ENCODE measurements at regions of chr3 and their contacts with region 1.

Region 1: GRCh38 chr3:17233398-17233800 is 348.6 kb downstream of the PLCL2 start:
- DNase-seq: no peak
- H3K4me3 ChIP-seq: no peak overlapping the region
- H3K27ac ChIP-seq: no peak overlapping the region
- H3K4me1 ChIP-seq: no peaks in the 10 kb centered on the region
- H3K27me3 ChIP-seq: no peaks in the 10 kb centered on the region
- CTCF ChIP-seq: peak; percentile 42 to 74 (median 63)
- EP300 ChIP-seq: no peak
- POLR2A ChIP-seq: no peak

Region 2: DNA sequence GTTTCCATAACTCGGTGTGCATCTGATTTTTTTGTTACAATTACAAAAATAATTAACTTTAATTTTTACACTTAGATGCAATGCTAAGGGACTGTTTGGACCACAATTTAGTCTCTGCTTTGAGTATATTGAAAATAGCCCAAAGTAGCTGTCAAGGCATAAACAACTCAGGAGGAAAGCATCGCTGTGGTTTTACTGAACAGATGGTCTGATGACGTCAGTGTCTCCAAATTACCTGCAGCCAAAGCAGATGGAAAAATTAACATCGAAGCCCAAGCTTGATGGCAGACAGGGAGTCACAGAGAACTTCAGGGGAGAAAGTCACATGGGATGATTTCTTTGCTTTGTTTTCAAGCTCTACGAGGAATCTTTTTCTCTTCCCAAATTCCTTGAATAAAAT is 431.7 kb before region 1 on chr3:
- in situ Hi-C with region 1: loop called in 1 of 4 experiments (anchors 25 kb)
- intact Hi-C with region 1: no loop called
- DNase-seq: no peak
- H3K4me3 ChIP-seq: no peak overlapping the region
- H3K27ac ChIP-seq: no peak overlapping the region
- H3K4me1 ChIP-seq: peaks cover 0 to 9% (median 0%) of the 10 kb centered on the region in 4 donors
- H3K27me3 ChIP-seq: no peaks in the 10 kb centered on the region
- CTCF ChIP-seq: no peak
- EP300 ChIP-seq: no peak
- POLR2A ChIP-seq: no peak

Region 3: DNA sequence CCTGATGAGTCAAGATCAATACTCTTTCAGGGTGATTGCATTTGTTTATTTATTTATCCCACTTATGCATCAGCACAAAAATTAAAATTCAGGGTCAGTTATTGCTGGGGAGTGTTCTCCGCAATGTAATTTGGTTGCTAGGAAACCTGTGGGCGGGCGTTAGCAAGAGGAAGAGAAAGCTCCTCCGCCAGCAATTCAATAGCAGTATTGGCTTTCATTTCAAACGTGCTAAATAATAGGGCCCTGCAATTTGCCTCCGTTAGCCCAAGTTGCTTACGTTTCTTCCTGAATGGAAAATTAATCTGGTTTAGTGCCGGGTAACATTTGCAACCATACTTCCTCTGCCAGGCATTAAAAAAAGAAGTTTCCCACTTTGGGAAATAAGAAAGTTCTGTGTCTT is 384.2 kb before region 1 on chr3:
- in situ Hi-C with region 1: loop called in 1 of 4 experiments (anchors 25 kb)
- intact Hi-C with region 1: no loop called
- DNase-seq: peak; percentile 87
- H3K4me3 ChIP-seq: peak overlapping the region in 1 of 4 donors; percentile 27
- H3K27ac ChIP-seq: peak overlapping the region in 3 of 4 donors; percentile 14 to 53 (median 51)
- H3K4me1 ChIP-seq: peaks cover 0 to 13% (median 0%) of the 10 kb centered on the region in 4 donors
- H3K27me3 ChIP-seq: no peaks in the 10 kb centered on the region
- CTCF ChIP-seq: no peak
- EP300 ChIP-seq: no peak
- POLR2A ChIP-seq: no peak

Region 4: DNA sequence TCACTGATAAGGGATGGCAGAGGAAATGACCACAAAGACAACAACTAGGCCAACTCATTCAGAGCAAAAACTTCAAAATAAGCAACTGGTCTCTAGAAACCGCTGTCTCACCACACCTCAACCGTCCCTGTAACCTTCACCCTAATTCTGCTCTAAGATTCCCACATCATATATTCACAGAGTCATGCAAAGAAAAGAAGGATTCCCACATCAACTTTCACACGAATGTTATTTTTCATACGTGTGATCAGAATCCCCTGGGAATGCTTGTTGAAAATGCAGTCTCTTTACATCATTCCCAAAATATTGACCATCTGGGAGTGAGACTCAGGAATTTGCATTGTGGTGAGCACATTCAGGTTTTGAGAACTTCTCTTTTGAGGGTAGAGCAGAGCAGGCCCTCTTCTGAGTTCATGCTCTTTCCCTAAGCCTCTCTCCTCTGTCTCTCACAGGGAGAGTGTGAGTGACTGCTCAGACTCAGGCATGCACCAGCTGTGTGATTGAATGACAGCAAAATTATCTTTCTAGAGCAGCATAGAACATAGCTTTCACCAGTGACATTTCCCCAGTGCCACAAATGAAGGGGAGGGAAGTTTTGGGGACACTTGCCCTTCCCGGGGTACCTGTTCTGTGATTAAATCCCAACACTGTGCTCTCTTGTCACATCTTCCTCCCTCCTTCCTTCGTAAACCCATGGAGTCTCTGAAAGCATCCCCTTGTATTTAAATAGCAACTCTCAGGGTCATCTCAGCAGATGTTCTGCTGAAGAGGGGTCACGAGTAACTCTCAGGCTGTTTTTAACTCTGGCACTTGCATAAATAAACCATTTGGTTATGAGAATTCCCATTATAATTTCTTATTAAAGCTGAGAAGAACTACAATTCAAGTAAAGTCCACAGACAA is 177.8 kb before region 1 on chr3:
- in situ Hi-C with region 1: no loop called
- intact Hi-C with region 1: no loop called
- DNase-seq: no peak
- H3K4me3 ChIP-seq: no peak overlapping the region
- H3K27ac ChIP-seq: no peak overlapping the region
- H3K4me1 ChIP-seq: no peaks in the 10 kb centered on the region
- H3K27me3 ChIP-seq: no peaks in the 10 kb centered on the region
- CTCF ChIP-seq: no peak
- EP300 ChIP-seq: no peak
- POLR2A ChIP-seq: no peak

Region 5: GRCh38 chr3:17195856-17196604 is 37.4 kb before region 1 on chr3:
- in situ Hi-C with region 1: no loop called
- intact Hi-C with region 1: no loop called
- DNase-seq: no peak
- H3K4me3 ChIP-seq: no peak overlapping the region
- H3K27ac ChIP-seq: no peak overlapping the region
- H3K4me1 ChIP-seq: peaks cover 0 to 12% (median 1%) of the 10 kb centered on the region in 4 donors
- H3K27me3 ChIP-seq: no peaks in the 10 kb centered on the region
- CTCF ChIP-seq: no peak
- EP300 ChIP-seq: no peak
- POLR2A ChIP-seq: no peak

Measured in transverse colon (tissue), 4 donors.